Activated naive CD4-positive, alpha-beta T cell treated with anti-CD3 and anti-CD28 coated beads for 36 hours (primary cell): ENCODE measurements at regions of chr10 and their contacts with region 1.

Region 1: GRCh38 chr10:58237014-58237830 is 30.5 kb downstream of the IPMK start:
- DNase-seq: peak; percentile 23
- H3K4me3 Mint-ChIP-seq: no peak overlapping the region
- H3K27ac Mint-ChIP-seq: peak overlapping the region; percentile 89
- H3K4me1 Mint-ChIP-seq: peaks cover 47% of the 10 kb centered on the region
- H3K27me3 Mint-ChIP-seq: no peaks in the 10 kb centered on the region

Region 2: DNA sequence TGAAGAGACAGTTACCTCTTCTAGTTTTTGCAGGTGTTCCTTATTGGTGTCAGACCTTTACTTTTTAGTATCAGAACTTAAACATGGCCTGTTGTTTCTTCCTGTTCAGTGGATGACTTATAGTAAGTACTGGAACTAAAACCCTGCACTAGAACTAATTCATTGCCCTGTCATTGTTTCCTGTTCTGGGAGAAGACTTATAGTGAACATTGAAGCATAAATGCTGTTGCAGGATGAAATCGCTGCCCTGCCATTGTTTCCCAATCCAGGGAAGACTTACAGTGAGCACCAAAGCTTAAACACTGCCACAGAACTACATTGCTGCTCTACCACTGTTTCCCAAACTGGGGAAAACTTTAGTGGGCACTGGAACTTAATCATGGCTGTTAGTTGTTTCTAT is 17.4 kb after region 1 on chr10:
- CTCF ChIA-PET with region 1: no interaction called
- intact Hi-C with region 1: loop called (anchors 1 kb)
- DNase-seq: no peak
- H3K4me3 Mint-ChIP-seq: no peak overlapping the region
- H3K27ac Mint-ChIP-seq: no peak overlapping the region
- H3K4me1 Mint-ChIP-seq: peaks cover 38% of the 10 kb centered on the region
- H3K27me3 Mint-ChIP-seq: no peaks in the 10 kb centered on the region

Region 3: GRCh38 chr10:58384999-58385783 is 148.0 kb after region 1 on chr10 and contains the start of gene TFAM:
- CTCF ChIA-PET with region 1: interaction called, 3 read pairs
- intact Hi-C with region 1: loop called (anchors 1 kb)
- DNase-seq: peak; percentile 98
- H3K4me3 Mint-ChIP-seq: peak within 1 kb of the TSS; percentile 100
- H3K27ac Mint-ChIP-seq: peak within 1 kb of the TSS; percentile 97
- H3K4me1 Mint-ChIP-seq: peaks cover 36% of the 10 kb centered on the region
- H3K27me3 Mint-ChIP-seq: no peaks in the 10 kb centered on the region
- total RNA-seq, gene TFAM: 87.7 to 91.8 TPM